K562 (cell line): ENCODE measurements at regions of chr3 and their contacts with region 1.

Region 1: GRCh38 chr3:41863024-41863423 is 98.9 kb downstream of the ULK4 start:
- DNase-seq: peak in 1 of 4 experiments; percentile 21
- ATAC-seq: peak; percentile 86
- H3K4me3 ChIP-seq: no peak overlapping the region
- H3K27ac ChIP-seq: no peak overlapping the region
- H3K4me1 ChIP-seq: no peaks in the 10 kb centered on the region
- H3K27me3 ChIP-seq: 0 out of 5 replicates have a peak, but pooled peaks cover 0 to 7% of the 10 kb centered on the region in 2 experiments
- CTCF ChIP-seq: peak; percentile 23 to 29 (median 27); a peak in 3 of 6 replicates
- EP300 ChIP-seq: no peak
- POLR2A ChIP-seq: no peak
- RAD21 ChIP-seq: peak in 1 of 2 experiments; percentile 42; a peak in 2 of 4 replicates

Region 2: DNA sequence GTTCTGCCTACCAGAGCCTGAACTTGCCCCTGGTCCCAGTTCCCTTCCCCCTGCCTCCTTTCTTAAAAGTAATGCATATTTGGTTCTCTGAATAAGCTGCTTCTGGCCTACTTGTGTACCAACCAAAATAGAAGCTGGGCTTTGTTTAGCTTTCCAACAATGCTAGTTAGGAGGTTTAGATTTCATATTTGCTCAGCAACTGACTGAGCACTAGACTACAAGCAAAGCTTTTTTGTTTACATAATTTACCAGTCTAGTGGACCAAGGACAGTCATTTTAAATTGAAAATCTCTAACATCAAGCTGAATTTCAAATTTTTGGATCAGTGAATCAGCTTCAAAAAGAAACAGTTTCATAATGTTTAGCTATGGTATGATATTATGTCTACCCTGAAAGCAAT is 232.3 kb before region 1 on chr3:
- CTCF ChIA-PET with region 1: no interaction called
- POLR2A ChIA-PET with region 1: no interaction called
- in situ Hi-C with region 1: no loop called
- intact Hi-C with region 1: no loop called
- DNase-seq: no peak
- ATAC-seq: no peak
- H3K4me3 ChIP-seq: no peak overlapping the region
- H3K27ac ChIP-seq: no peak overlapping the region
- H3K4me1 ChIP-seq: no peaks in the 10 kb centered on the region
- H3K27me3 ChIP-seq: peaks cover 0 to 3% of the 10 kb centered on the region in 2 experiments; a peak in 1 of 5 replicates
- CTCF ChIP-seq: no peak
- EP300 ChIP-seq: no peak
- POLR2A ChIP-seq: no peak
- RAD21 ChIP-seq: no peak

Region 3: GRCh38 chr3:41701191-41701698 is 161.8 kb before region 1 on chr3:
- CTCF ChIA-PET with region 1: no interaction called
- POLR2A ChIA-PET with region 1: no interaction called
- in situ Hi-C with region 1: loop called (anchors 10 kb)
- intact Hi-C with region 1: no loop called
- DNase-seq: no peak
- ATAC-seq: no peak
- H3K4me3 ChIP-seq: no peak overlapping the region
- H3K27ac ChIP-seq: no peak overlapping the region
- H3K4me1 ChIP-seq: peaks cover 3 to 23% of the 10 kb centered on the region in 2 experiments; a peak in 3 of 5 replicates
- H3K27me3 ChIP-seq: no peaks in the 10 kb centered on the region
- CTCF ChIP-seq: no peak
- EP300 ChIP-seq: no peak
- POLR2A ChIP-seq: no peak
- RAD21 ChIP-seq: no peak

Region 4: GRCh38 chr3:41846850-41847249 is 16.2 kb before region 1 on chr3:
- CTCF ChIA-PET with region 1: no interaction called
- POLR2A ChIA-PET with region 1: no interaction called
- in situ Hi-C with region 1: no loop called
- intact Hi-C with region 1: no loop called
- DNase-seq: no peak
- ATAC-seq: no peak
- H3K4me3 ChIP-seq: no peak overlapping the region
- H3K27ac ChIP-seq: no peak overlapping the region
- H3K4me1 ChIP-seq: peaks cover 0 to 6% of the 10 kb centered on the region in 2 experiments; a peak in 1 of 5 replicates
- H3K27me3 ChIP-seq: peaks cover 0 to 14% of the 10 kb centered on the region in 2 experiments; a peak in 1 of 5 replicates
- CTCF ChIP-seq: no peak
- EP300 ChIP-seq: no peak
- POLR2A ChIP-seq: no peak
- RAD21 ChIP-seq: no peak